ENCODE measurements at regions of chr19 and their contacts with region 1.

Region 1: DNA sequence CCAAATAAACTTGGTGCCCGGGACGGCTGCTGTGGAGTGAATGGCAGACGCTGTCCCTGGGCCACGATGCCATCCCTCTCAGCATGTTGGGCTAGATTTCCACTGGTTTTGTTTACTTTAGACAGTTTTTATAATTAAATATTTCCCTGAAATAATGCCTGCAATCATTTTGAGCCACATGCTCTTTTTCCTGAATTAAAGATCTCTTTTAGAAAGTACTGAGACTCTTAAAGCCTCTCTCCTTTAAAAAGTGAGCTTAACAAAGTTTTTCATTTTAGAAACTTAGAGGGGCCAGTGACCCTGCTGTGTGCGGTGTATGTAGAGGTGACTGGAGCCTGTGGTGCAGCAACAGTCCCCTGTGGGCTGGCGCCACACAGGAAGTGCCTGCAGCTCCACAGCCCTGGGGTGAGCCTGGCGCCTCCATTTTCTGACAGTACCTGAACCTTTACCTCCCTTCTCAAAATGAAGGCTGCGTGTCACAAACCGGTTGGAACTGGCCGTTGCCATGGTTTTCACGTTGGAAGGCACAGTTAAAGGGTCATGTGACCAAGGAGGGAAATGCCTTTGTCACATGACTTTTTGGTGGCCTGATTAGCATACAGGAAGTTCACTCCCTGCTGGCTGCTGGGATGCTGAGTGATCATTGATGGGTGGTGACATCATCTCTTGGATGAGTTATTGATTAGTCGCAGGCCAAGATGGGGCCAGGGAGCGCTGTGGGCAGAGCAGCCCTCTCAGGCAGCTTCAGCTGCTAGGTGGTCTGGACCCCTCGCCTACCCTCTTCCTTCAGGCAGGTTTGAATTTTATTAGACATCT is 26.3 kb downstream of the TSSK6 start:
- DNase-seq: peak; percentile 53
- ATAC-seq: peak; percentile 62
- H3K4me3 Mint-ChIP-seq: peak overlapping the region; percentile 58
- H3K27ac Mint-ChIP-seq: peak overlapping the region; percentile 91
- H3K4me1 Mint-ChIP-seq: peaks cover 58% of the 10 kb centered on the region
- H3K27me3 Mint-ChIP-seq: no peaks in the 10 kb centered on the region
- CTCF ChIP-seq: no peak

Region 2: GRCh38 chr19:19145684-19146608 is 343.1 kb before region 1 on chr19:
- CTCF ChIA-PET with region 1: no interaction called
- POLR2A ChIA-PET with region 1: no interaction called
- intact Hi-C with region 1: loop called (anchors 2 kb)
- DNase-seq: peak; percentile 92
- ATAC-seq: peak; percentile 93
- H3K4me3 Mint-ChIP-seq: no peak overlapping the region
- H3K27ac Mint-ChIP-seq: no peak overlapping the region
- H3K4me1 Mint-ChIP-seq: peaks cover 5% of the 10 kb centered on the region
- H3K27me3 Mint-ChIP-seq: no peaks in the 10 kb centered on the region
- CTCF ChIP-seq: no peak

Region 3: GRCh38 chr19:19320362-19321142 is 168.5 kb before region 1 on chr19 and contains the starts of genes MAU2 and SUGP1:
- CTCF ChIA-PET with region 1: interaction called, 6 read pairs
- POLR2A ChIA-PET with region 1: interaction called, 3 read pairs
- intact Hi-C with region 1: loop called (anchors 1 kb)
- DNase-seq: peak; percentile 82
- ATAC-seq: peak; percentile 92
- H3K4me3 Mint-ChIP-seq: peak within 1 kb of the TSS; percentile 98
- H3K27ac Mint-ChIP-seq: peak within 1 kb of the TSS; percentile 100
- H3K4me1 Mint-ChIP-seq: peaks cover 42% of the 10 kb centered on the region
- H3K27me3 Mint-ChIP-seq: no peaks in the 10 kb centered on the region
- CTCF ChIP-seq: no peak
- total RNA-seq, gene MAU2: 107 and 126 TPM in 2 replicates
- total RNA-seq, gene SUGP1: 68.6 and 73.0 TPM in 2 replicates

Region 4: GRCh38 chr19:19366612-19367396 is 122.3 kb before region 1 on chr19:
- CTCF ChIA-PET with region 1: interaction called, 140 read pairs
- POLR2A ChIA-PET with region 1: interaction called, 35 read pairs
- intact Hi-C with region 1: loop called (anchors 1 kb)
- DNase-seq: peak; percentile 65
- ATAC-seq: peak; percentile 84
- H3K4me3 Mint-ChIP-seq: peak overlapping the region; percentile 36
- H3K27ac Mint-ChIP-seq: peak overlapping the region; percentile 69
- H3K4me1 Mint-ChIP-seq: peaks cover 20% of the 10 kb centered on the region
- H3K27me3 Mint-ChIP-seq: no peaks in the 10 kb centered on the region
- CTCF ChIP-seq: peak; percentile 83

Region 5: DNA sequence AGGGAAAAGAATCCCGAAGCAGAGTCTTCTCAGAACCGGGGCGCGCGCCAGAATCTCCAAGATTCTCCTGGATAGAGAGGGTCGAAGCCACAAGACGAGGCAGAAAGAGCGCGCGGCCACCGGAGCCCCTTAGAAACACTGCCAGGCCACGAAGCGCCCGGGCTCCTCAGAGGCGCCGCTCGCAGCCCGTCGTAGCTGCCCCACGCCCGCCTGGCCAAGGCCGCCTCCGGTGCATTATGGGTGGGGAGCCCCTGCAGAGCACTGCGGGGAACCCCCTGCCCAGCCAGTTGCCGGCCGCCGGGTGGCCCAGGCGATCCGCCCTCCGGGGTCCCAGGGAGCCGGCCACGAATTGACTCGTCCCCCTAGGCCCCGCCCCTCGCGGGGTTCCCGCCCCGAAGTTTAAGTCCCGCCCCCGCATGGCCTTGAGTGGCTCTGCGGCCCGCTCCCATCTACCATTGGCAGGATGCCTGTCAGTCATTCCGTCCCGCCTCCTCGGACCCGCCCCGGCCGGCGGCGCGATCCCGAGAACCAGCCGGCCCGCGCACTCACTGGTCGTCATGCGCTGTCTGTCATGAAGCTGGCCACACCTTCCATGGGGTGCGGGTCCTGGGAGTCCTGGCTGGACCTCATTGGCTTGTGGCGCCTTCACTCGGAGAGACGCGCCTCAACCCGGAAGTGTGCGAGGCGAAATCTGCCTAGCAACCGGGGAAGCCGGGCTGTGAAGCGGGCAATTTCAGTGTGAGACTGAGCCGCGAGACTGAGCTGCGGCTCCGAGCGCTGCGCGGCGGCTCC is 103.8 kb before region 1 on chr19:
- CTCF ChIA-PET with region 1: interaction called, 10 read pairs
- POLR2A ChIA-PET with region 1: interaction called, 24 read pairs
- intact Hi-C with region 1: loop called (anchors 1 kb)
- DNase-seq: peak; percentile 98
- ATAC-seq: peak; percentile 89
- H3K4me3 Mint-ChIP-seq: peak overlapping the region; percentile 87
- H3K27ac Mint-ChIP-seq: peak overlapping the region; percentile 83
- H3K4me1 Mint-ChIP-seq: peaks cover 43% of the 10 kb centered on the region
- H3K27me3 Mint-ChIP-seq: no peaks in the 10 kb centered on the region
- CTCF ChIP-seq: no peak

Region 6: GRCh38 chr19:19459707-19460251 is 29.3 kb before region 1 on chr19:
- CTCF ChIA-PET with region 1: interaction called, 5 read pairs
- POLR2A ChIA-PET with region 1: interaction called, 6 read pairs
- intact Hi-C with region 1: loop called (anchors 2 kb)
- DNase-seq: no peak
- ATAC-seq: peak; percentile 69
- H3K4me3 Mint-ChIP-seq: peak overlapping the region; percentile 83
- H3K27ac Mint-ChIP-seq: peak overlapping the region; percentile 86
- H3K4me1 Mint-ChIP-seq: peaks cover 72% of the 10 kb centered on the region
- H3K27me3 Mint-ChIP-seq: no peaks in the 10 kb centered on the region
- CTCF ChIP-seq: no peak

Region 7: GRCh38 chr19:19884583-19884982 is 395.5 kb after region 1 on chr19:
- CTCF ChIA-PET with region 1: no interaction called
- POLR2A ChIA-PET with region 1: no interaction called
- intact Hi-C with region 1: no loop called
- DNase-seq: no peak
- ATAC-seq: no peak
- H3K4me3 Mint-ChIP-seq: no peak overlapping the region
- H3K27ac Mint-ChIP-seq: no peak overlapping the region
- H3K4me1 Mint-ChIP-seq: no peaks in the 10 kb centered on the region
- H3K27me3 Mint-ChIP-seq: no peaks in the 10 kb centered on the region
- CTCF ChIP-seq: no peak